ENCODE measurements at regions of chr13 and their contacts with region 1.

Region 1: DNA sequence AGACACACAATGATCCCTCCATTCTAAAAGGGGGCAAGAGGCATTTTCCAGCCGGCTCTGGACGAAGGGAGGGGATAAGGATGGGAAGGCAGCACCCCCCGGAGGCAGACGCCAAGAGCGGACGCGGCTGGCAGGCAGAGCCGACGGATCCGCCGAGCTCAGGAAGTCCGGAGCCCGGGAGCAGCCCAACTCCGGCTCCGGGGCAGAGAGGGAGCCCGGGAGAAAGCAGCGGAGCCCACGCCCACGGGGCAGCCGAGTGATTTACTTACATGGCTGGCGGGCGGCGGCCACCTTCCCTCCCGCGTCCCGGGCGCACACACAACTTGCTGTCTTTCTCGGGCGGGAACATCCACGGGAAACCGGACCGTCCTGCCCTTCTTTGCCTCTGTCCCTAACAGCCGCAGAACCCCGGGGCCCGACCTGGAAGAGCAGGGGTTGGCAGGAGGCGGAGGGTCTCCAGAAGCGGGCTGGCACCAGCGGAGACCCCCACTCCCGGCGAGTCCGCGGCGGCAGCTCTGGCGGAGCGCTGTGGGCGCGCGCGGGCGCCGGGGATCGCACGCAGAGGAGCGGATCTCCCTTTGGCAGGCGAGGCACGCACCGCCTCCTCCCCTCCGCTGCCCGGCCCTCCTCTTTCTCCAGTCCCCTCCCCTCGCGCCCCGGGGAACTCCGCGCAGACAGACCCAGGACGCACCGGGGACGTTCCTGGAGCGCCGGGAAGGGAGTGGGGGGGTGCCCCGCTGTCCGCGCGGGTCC is at the start of gene LHFPL6:
- DNase-seq: peak; percentile 83 to 95 (median 87)
- H3K4me3 ChIP-seq: peak within 1 kb of the TSS; percentile 63 to 82 (median 77)
- H3K27ac ChIP-seq: peak within 1 kb of the TSS; percentile 56 to 70
- H3K4me1 ChIP-seq: peaks cover 0 to 10% (median 7%) of the 10 kb centered on the region in 3 donors
- H3K27me3 ChIP-seq: no peaks in the 10 kb centered on the region
- CTCF ChIP-seq: peak; percentile 9
- total RNA-seq, gene LHFPL6: 59.2 TPM

Region 2: GRCh38 chr13:39263033-39263432 is 339.8 kb before region 1 on chr13:
- intact Hi-C with region 1: loop called (anchors 10 kb)
- DNase-seq: peak in 3 of 5 donors; percentile 27 to 76 (median 55)
- H3K4me3 ChIP-seq: no peak overlapping the region
- H3K27ac ChIP-seq: peak overlapping the region in 1 of 2 donors; percentile 41
- H3K4me1 ChIP-seq: peaks cover 0 to 3% (median 0%) of the 10 kb centered on the region in 3 donors
- H3K27me3 ChIP-seq: no peaks in the 10 kb centered on the region
- CTCF ChIP-seq: peak; percentile 53

Region 3: GRCh38 chr13:41411522-41411921 is 1808.7 kb after region 1 on chr13:
- intact Hi-C with region 1: no loop called
- DNase-seq: peak in 2 of 5 donors; percentile 27 to 65
- H3K4me3 ChIP-seq: no peak overlapping the region
- H3K27ac ChIP-seq: no peak overlapping the region
- H3K4me1 ChIP-seq: no peaks in the 10 kb centered on the region
- H3K27me3 ChIP-seq: no peaks in the 10 kb centered on the region
- CTCF ChIP-seq: peak; percentile 9